Left ventricle myocardium inferior (tissue), 1 donor: ENCODE measurements at regions of chr4 and their contacts with region 1.

Region 1: DNA sequence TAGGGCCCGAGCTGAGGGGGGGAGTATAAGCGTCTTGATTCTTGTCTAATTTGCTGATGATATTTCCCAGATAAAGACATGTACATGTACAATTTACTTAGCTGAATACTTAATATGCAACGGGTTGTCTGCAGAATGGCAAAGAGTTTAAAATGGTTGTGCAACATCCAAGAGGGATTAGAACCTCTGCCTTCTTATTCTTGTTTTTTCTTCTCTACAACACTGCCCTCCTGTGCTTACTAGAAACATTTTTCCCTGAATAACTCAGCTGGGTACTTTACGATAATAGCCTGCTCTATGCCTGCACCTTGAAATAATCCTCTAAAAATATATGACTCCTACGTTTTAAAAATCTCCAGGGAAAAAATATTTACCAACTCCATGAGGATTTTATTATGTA is 41.8 kb downstream of the INTS12 start:
- DNase-seq: no peak
- H3K4me3 ChIP-seq: no peak overlapping the region
- H3K27ac ChIP-seq: no peak overlapping the region
- H3K4me1 ChIP-seq: no peaks in the 10 kb centered on the region
- H3K27me3 ChIP-seq: peaks cover 4% of the 10 kb centered on the region
- CTCF ChIP-seq: peak; percentile 55

Region 2: DNA sequence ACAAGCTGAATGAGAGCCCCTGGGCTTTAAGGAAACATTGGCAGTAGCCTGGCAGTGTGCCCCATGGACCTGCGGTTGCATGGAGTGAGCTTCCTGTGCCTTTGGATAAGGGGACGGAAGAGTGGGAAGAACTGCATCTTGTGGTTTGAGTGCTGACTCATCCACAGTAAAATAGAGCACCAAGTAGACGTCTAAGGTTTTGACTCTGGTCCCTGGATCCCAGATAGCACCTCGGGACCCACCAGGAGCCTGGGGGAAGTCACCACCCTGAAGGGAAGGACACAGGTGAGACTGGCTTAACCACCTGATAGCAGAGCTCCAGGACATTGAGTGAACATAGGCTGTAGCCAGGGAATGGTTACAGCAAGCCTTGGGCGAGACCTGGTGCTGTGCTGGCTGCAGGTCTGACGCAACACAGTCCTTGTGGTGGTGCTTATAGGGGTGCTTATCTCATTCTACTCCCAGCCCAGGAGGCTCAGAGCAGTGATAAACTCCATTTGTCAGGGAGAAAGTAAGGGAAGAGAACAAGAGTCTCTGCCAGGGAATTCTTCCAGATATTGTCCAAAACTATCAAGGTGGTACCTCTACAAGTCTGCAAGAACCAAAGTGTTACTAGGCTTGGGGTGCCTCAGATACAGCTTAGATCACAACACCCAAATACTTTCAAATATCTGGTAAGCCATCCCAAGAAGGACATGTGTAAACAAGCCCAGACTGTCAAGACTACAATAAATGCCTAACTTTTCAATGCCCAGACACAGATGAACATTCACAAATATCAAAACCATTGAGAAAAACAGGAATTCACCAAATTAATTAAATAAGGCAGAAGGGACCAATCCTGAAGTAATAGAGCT is 643.7 kb before region 1 on chr4:
- intact Hi-C with region 1: no loop called
- DNase-seq: no peak
- H3K4me3 ChIP-seq: no peak overlapping the region
- H3K27ac ChIP-seq: no peak overlapping the region
- H3K4me1 ChIP-seq: no peaks in the 10 kb centered on the region
- H3K27me3 ChIP-seq: no peaks in the 10 kb centered on the region
- CTCF ChIP-seq: no peak

Region 3: GRCh38 chr4:105520817-105521790 is 145.6 kb before region 1 on chr4:
- intact Hi-C with region 1: loop called (anchors 5 kb)
- DNase-seq: no peak
- H3K4me3 ChIP-seq: no peak overlapping the region
- H3K27ac ChIP-seq: no peak overlapping the region
- H3K4me1 ChIP-seq: no peaks in the 10 kb centered on the region
- H3K27me3 ChIP-seq: no peaks in the 10 kb centered on the region
- CTCF ChIP-seq: peak; percentile 71